WTC11 (cell line): ENCODE measurements at regions of chr17 and their contacts with region 1.

Region 1: DNA sequence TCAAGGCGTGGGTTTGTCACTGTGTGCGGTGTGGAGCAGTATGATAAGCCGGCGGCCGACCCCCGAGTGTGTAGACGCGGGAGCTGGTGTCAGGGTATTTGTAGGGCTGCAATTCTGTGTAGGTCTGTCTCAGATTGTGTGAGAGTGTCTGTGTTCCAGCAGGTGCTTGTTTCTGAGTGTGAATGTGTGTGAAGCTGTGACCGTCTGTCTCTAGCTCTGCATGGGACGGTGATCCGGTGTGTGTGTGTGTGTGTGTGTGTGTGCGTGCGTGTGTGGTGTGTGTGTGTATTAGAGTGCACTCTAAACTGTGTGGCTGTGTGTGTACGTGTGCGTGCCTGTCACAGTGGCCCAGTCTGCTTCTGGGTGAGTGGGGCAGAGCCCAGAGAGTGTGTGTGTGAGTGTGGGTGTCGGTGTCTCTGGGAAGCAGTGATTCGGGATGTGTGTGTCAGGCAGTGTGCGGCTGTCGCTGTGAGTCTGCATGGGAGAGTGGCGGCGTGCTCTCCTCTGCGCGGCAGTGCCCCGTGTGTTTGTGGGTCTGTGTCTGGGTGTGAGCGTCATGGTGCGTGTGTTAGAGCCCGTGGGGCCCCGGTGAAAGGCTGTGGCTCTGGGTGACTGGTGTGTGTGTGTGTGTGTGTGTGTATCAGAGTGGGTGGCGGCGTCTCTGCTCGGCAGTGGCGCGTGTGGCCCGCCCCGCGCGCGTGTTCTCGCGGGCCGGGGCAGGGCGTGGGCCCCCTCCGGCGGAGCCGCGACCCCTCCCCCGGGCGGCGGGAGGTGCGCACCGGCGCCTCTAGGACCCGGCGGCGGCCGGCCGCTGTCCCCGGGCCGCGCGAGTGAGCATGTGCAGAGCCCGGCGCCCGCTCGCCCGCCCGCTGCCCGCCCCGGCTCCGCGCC is at the start of gene WSCD1:
- DNase-seq: peak; percentile 33
- ATAC-seq: peak; percentile 33
- H3K4me3 Mint-ChIP-seq: peak within 1 kb of the TSS; percentile 90
- H3K27ac Mint-ChIP-seq: peak within 1 kb of the TSS; percentile 18; the same call in 1 of the 2 replicates
- H3K4me1 Mint-ChIP-seq: peaks cover 29% of the 10 kb centered on the region
- H3K27me3 Mint-ChIP-seq: peaks cover 16% of the 10 kb centered on the region
- CTCF ChIP-seq: no peak
- total RNA-seq, gene WSCD1: 57.5 to 80.2 TPM (median 71.9 TPM) in 3 replicates

Region 2: GRCh38 chr17:5838646-5839300 is 231.0 kb before region 1 on chr17:
- CTCF ChIA-PET with region 1: interaction called, 16 read pairs
- POLR2A ChIA-PET with region 1: no interaction called
- DNase-seq: peak; percentile 48
- ATAC-seq: peak; percentile 80
- H3K4me3 Mint-ChIP-seq: no peak overlapping the region
- H3K27ac Mint-ChIP-seq: no peak overlapping the region
- H3K4me1 Mint-ChIP-seq: peaks cover 31% of the 10 kb centered on the region
- H3K27me3 Mint-ChIP-seq: no peaks in the 10 kb centered on the region
- CTCF ChIP-seq: no peak

Region 3: DNA sequence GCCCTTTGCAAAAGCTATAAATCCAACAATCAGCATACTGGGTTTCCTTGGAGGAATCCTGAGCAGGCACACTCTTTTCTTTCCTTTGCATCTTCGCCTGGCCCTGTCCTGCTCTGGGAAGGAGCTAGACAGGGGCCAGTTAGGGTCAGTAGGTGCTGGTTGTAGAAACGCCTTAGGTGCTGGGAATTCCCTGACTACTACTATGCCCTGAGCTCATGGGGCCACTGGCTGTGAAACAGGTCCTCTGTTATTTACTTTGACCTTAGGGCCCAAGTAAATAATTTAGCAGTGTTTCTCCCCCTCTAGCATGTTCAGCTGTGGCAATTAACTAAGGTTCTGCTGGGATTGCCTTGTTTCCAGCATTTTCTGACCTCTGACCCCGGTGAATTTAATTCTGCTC is 15.4 kb before region 1 on chr17:
- CTCF ChIA-PET with region 1: interaction called, 10 read pairs
- POLR2A ChIA-PET with region 1: no interaction called
- DNase-seq: no peak
- ATAC-seq: no peak
- H3K4me3 Mint-ChIP-seq: no peak overlapping the region
- H3K27ac Mint-ChIP-seq: no peak overlapping the region
- H3K4me1 Mint-ChIP-seq: peaks cover 22% of the 10 kb centered on the region
- H3K27me3 Mint-ChIP-seq: no peaks in the 10 kb centered on the region; the same call in none of the 2 replicates
- CTCF ChIP-seq: no peak